SK-N-SH (cell line): ENCODE measurements at regions of chr5 and their contacts with region 1.

Region 1: GRCh38 chr5:5613261-5613990 is 190.9 kb downstream of the ICE1 start:
- DNase-seq: no peak
- H3K4me3 ChIP-seq: no peak overlapping the region; a peak in 1 of 4 replicates
- H3K27ac ChIP-seq: peak overlapping the region in 1 of 2 experiments; percentile 100; a peak in 2 of 4 replicates
- H3K4me1 ChIP-seq: peaks cover 0 to 21% of the 10 kb centered on the region in 2 experiments; a peak in 2 of 4 replicates
- H3K27me3 ChIP-seq: no peaks in the 10 kb centered on the region
- CTCF ChIP-seq: no peak
- EP300 ChIP-seq: no peak
- RAD21 ChIP-seq: no peak

Region 2: DNA sequence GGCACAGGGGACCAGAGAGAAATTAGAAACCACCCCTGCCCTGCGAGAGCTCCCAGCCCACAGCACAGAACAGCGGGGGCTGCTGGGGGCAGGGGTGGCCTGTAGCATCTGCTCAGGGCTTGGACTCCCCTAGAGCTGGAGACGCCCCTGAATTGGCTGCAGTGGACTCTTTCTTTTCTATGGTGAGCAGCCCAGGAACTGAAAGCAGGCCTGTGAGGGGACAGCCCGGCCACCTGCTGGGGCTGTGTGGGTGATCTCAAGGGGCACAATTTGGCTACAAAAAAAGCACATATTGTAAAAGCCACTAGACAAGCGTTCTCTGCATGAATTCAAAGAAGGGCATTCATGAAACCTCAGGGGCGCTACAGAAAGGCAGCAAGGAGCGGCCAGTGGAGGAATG is 248.5 kb before region 1 on chr5:
- CTCF ChIA-PET with region 1: no interaction called
- POLR2A ChIA-PET with region 1: no interaction called
- DNase-seq: no peak
- H3K4me3 ChIP-seq: no peak overlapping the region
- H3K27ac ChIP-seq: no peak overlapping the region
- H3K4me1 ChIP-seq: peaks cover 0 to 2% of the 10 kb centered on the region in 2 experiments; a peak in 1 of 4 replicates
- H3K27me3 ChIP-seq: no peaks in the 10 kb centered on the region
- CTCF ChIP-seq: no peak
- EP300 ChIP-seq: no peak
- RAD21 ChIP-seq: no peak

Region 3: GRCh38 chr5:5508391-5508790 is 105.0 kb before region 1 on chr5:
- CTCF ChIA-PET with region 1: interaction called, 11 read pairs
- POLR2A ChIA-PET with region 1: interaction called, 9 read pairs
- DNase-seq: no peak
- H3K4me3 ChIP-seq: no peak overlapping the region
- H3K27ac ChIP-seq: no peak overlapping the region; a peak in 1 of 4 replicates
- H3K4me1 ChIP-seq: peaks cover 0 to 22% of the 10 kb centered on the region in 2 experiments; a peak in 2 of 4 replicates
- H3K27me3 ChIP-seq: no peaks in the 10 kb centered on the region
- CTCF ChIP-seq: no peak
- EP300 ChIP-seq: no peak
- RAD21 ChIP-seq: no peak

Region 4: GRCh38 chr5:5588887-5589826 is 24.3 kb before region 1 on chr5:
- CTCF ChIA-PET with region 1: no interaction called
- POLR2A ChIA-PET with region 1: no interaction called
- DNase-seq: no peak
- H3K4me3 ChIP-seq: no peak overlapping the region
- H3K27ac ChIP-seq: no peak overlapping the region
- H3K4me1 ChIP-seq: peaks cover 0 to 13% of the 10 kb centered on the region in 2 experiments; a peak in 1 of 4 replicates
- H3K27me3 ChIP-seq: no peaks in the 10 kb centered on the region
- CTCF ChIP-seq: no peak
- EP300 ChIP-seq: no peak
- RAD21 ChIP-seq: no peak

Region 5: DNA sequence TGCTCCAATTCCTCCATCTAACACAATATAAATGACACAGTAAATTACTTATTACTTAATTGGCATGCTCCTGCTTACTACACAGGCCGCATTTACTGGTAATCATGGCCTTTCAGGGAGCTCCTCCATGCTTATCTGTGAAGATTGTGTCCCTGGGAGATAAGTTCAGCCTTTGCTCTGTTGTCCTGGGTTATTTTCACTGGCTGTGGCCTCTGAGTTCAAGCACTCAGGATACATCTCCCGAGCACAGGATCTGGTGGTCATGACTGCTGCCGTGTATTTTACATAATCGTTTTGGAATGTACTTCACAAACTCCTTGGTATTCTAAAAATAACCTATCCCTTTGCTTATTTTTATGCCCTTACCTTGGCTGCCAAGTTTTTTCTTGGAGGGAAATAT is 24.8 kb after region 1 on chr5:
- CTCF ChIA-PET with region 1: interaction called, 18 read pairs
- POLR2A ChIA-PET with region 1: interaction called, 3 read pairs
- DNase-seq: peak; percentile 22
- H3K4me3 ChIP-seq: no peak overlapping the region
- H3K27ac ChIP-seq: peak overlapping the region in 1 of 2 experiments; percentile 98; a peak in 2 of 4 replicates
- H3K4me1 ChIP-seq: peaks cover 0 to 41% of the 10 kb centered on the region in 2 experiments; a peak in 2 of 4 replicates
- H3K27me3 ChIP-seq: no peaks in the 10 kb centered on the region
- CTCF ChIP-seq: no peak
- EP300 ChIP-seq: peak in 1 of 2 experiments; percentile 80; a peak in 2 of 4 replicates
- RAD21 ChIP-seq: peak; percentile 25; the same call in 1 of the 2 replicates

Region 6: DNA sequence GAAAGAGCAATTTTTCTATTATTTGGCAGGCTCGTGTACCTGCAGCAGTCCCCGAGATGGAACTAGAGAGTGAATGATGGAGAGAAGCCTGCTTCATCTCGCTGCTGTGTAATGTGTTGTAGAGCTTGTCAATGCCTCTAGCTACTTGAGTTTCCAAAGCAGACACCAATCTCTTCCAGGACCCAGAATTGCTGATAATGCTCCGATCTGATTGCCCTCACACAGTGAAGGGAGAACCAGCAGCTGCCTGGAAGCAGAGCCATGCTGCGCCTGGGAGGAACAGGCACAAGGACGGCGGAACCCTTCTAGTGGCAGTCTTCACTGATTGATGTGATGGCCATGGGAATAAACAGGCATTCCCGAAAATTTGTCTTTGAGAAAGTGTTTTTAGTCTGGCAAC is 97.0 kb after region 1 on chr5:
- CTCF ChIA-PET with region 1: interaction called, 23 read pairs
- POLR2A ChIA-PET with region 1: interaction called, 12 read pairs
- DNase-seq: peak; percentile 65
- H3K4me3 ChIP-seq: no peak overlapping the region
- H3K27ac ChIP-seq: peak overlapping the region; percentile 36 to 100; a peak in 3 of 4 replicates
- H3K4me1 ChIP-seq: peaks cover 0 to 39% of the 10 kb centered on the region in 2 experiments; a peak in 2 of 4 replicates
- H3K27me3 ChIP-seq: no peaks in the 10 kb centered on the region
- CTCF ChIP-seq: no peak
- EP300 ChIP-seq: peak; percentile 55 to 99
- RAD21 ChIP-seq: peak; percentile 62